ENCODE measurements at regions of chr3 and their contacts with region 1.

Region 1: DNA sequence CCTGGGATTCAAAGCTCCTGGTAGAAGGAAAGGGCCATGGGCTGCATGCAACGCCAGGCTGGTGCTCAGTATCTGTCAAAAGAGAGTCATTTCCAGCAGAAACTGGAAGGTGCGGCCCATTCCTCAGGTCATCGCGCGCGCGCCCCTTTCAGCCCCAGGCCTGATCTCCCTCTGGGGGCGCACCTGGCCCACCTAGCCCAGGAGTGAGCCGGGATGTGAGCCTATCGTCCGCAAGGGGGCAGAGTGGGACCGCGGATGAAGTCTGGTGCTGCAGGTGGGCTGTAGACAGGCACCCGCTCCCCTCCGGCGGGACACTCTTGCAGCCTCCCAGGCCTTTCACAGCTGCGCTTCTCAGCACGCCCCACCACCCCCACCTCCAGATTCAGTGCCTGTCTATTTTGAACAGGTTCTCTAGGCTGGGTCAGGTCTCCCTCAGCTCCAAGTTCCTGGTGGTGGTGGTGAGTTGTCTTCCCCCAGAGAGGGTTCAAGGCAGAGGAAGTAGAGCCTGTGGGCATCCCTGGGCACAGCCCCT is 5.8 kb upstream of the RPL29 start:
- DNase-seq: peak; percentile 71 to 75 (median 72)
- ATAC-seq: peak; percentile 71 to 78 (median 75)
- H3K4me3 ChIP-seq: no peak overlapping the region
- H3K27ac ChIP-seq: no peak overlapping the region
- H3K4me1 ChIP-seq: peaks cover 0 to 9% (median 0%) of the 10 kb centered on the region in 4 donors
- H3K27me3 ChIP-seq: no peaks in the 10 kb centered on the region
- CTCF ChIP-seq: peak; percentile 86 to 96 (median 89)
- POLR2A ChIP-seq: no peak

Region 2: GRCh38 chr3:52123106-52123725 is 121.7 kb after region 1 on chr3:
- intact Hi-C with region 1: loop called in 1 of 2 experiments (anchors 5 kb)
- DNase-seq: peak; percentile 73 to 84 (median 75)
- ATAC-seq: peak; percentile 86 to 92 (median 90)
- H3K4me3 ChIP-seq: no peak overlapping the region
- H3K27ac ChIP-seq: no peak overlapping the region
- H3K4me1 ChIP-seq: no peaks in the 10 kb centered on the region
- H3K27me3 ChIP-seq: no peaks in the 10 kb centered on the region
- CTCF ChIP-seq: peak; percentile 92 to 97 (median 94)
- POLR2A ChIP-seq: no peak

Region 3: GRCh38 chr3:52144034-52144795 is 142.7 kb after region 1 on chr3:
- intact Hi-C with region 1: loop called (anchors 2 to 5 kb)
- DNase-seq: peak; percentile 81 to 84 (median 82)
- ATAC-seq: peak; percentile 90 to 97 (median 96)
- H3K4me3 ChIP-seq: no peak overlapping the region
- H3K27ac ChIP-seq: no peak overlapping the region
- H3K4me1 ChIP-seq: no peaks in the 10 kb centered on the region
- H3K27me3 ChIP-seq: no peaks in the 10 kb centered on the region
- CTCF ChIP-seq: peak; percentile 95 to 98 (median 96)
- POLR2A ChIP-seq: no peak

Measured in right lobe of liver (tissue), 6 donors.